ENCODE measurements at regions of chr2 and their contacts with region 1.

Region 1: DNA sequence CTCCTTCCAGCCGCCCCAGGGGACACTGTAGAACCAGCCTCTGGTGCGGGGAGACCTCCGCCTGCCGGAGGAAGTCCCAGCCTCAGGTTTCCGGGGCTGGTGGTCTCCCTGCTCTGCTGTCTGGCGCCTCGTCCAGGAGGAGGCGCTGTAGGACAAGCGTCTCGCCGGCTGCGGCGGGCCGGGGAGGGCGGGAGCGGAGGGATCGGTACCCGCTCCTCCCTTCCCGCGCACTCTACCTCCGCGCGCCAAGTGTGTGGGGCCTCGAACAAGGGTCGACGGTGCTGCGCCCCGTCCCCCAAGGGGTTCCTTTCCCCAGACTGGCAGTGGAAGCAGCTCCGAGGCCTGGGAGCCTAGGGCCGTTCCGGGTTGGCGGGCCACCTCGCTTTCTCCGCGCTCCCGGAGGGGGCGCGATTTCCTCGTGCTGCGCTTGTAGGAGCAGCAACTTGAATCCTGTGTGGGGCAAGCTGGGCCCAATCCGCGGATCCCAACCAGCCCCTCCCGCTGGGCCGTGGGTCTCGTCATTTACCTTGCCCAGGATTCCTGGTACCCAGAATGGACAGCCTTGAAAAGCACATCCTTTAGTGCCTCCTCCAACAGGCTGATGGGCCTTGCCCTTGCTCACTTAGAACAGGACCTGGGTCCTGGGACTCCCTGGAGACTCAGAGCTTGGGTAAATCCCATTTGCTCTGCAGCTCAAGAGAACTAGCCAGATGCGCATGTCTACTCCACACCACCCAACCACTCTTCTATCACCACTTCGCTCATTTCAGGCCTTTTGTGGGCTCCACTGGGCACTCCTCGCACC is 10.6 kb upstream of the HOXD4 start:
- DNase-seq: peak; percentile 64
- H3K4me3 Mint-ChIP-seq: no peak overlapping the region
- H3K27ac Mint-ChIP-seq: no peak overlapping the region
- H3K4me1 Mint-ChIP-seq: peaks cover 8% of the 10 kb centered on the region
- H3K27me3 Mint-ChIP-seq: peaks cover 80% of the 10 kb centered on the region

Region 2: DNA sequence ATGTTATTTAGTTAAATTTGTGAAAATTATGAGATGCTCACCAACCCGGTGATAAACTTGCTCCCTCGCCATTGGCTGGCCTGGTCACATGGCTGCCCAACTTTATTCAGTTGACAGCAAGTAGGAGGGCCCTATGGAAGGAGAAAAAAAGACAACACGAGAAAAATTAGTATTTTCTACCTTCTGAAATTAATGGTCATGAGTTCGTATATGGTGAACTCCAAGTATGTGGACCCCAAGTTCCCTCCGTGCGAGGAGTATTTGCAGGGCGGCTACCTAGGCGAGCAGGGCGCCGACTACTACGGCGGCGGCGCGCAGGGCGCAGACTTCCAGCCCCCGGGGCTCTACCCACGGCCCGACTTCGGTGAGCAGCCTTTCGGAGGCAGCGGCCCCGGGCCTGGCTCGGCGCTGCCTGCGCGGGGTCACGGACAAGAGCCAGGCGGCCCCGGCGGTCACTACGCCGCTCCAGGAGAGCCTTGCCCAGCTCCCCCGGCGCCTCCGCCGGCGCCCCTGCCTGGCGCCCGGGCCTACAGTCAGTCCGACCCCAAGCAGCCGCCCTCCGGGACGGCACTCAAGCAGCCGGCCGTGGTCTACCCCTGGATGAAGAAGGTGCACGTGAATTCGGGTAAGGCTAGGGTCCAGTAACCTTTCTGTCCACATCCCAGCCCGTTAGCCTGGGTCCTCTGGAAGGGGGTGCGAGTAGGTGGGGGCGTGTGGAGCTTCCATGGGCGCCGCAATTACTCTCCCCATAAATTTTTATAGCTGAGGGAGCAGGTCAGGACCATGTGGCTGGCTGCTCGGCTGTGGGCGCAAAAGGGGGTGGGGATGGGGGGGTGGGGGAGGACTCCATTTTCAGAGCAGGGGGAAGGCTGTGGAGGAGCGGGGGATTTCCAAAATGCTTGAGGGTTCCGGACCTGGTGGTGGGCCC is 11.0 kb after region 1 on chr2 and contains the start of gene HOXD4:
- intact Hi-C with region 1: loop called (anchors 2 kb)
- DNase-seq: no peak
- H3K4me3 Mint-ChIP-seq: no peak within 1 kb of the TSS
- H3K27ac Mint-ChIP-seq: no peak within 1 kb of the TSS
- H3K4me1 Mint-ChIP-seq: no peaks in the 10 kb centered on the region
- H3K27me3 Mint-ChIP-seq: peaks cover 88% of the 10 kb centered on the region
- total RNA-seq, gene HOXD4: not detected in 2 replicates

Region 3: DNA sequence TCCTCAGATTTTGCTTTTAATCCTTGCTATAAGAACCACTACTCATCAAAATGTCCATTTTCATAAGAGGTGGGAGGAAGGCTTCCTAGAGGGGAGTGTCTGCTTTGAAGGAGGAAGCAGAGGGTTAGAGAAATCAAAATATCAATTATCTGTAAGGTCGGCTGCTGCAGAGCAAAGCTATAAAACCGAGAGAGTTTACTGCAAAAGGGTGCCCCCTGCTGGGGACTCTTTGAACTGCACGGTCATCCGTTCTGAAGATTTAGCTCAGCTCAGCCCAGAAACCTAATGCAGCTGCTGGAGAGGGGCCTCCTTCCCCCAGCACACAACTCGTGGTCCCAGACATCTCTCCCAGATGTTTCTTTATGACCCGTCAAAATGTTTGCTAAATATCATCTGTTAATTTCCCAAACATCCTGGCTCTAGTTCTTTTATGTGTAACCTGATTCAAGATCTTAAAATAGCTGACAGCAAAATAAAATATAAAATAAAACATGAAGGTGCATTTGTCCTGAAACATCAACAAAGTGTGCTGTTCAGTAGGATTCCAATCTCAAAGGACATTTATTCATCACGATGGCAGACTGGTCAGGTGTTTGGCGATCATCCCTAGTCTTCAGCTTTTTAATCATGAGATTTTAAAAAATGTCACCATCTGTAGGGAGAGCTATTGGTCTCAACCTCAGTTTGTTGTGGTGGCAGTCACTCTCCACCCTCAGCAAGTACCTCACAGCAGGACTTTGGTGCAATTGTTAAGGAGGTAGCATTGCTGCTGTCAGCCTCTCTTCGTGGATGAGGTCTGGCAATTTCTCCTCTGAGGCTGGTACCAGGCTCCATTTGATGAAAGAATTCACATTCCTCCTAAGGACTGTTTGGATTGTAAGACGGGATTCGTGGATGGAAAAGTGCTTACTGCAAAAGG is 314.4 kb after region 1 on chr2:
- intact Hi-C with region 1: loop called (anchors 5 kb)
- DNase-seq: peak; percentile 60
- H3K4me3 Mint-ChIP-seq: no peak overlapping the region
- H3K27ac Mint-ChIP-seq: no peak overlapping the region
- H3K4me1 Mint-ChIP-seq: peaks cover 2% of the 10 kb centered on the region
- H3K27me3 Mint-ChIP-seq: peaks cover 41% of the 10 kb centered on the region

Region 4: GRCh38 chr2:176554101-176555048 is 413.7 kb after region 1 on chr2:
- intact Hi-C with region 1: loop called (anchors 1 kb)
- DNase-seq: no peak
- H3K4me3 Mint-ChIP-seq: peak overlapping the region; percentile 73
- H3K27ac Mint-ChIP-seq: peak overlapping the region; percentile 4
- H3K4me1 Mint-ChIP-seq: peaks cover 11% of the 10 kb centered on the region
- H3K27me3 Mint-ChIP-seq: peaks cover 44% of the 10 kb centered on the region

Region 5: DNA sequence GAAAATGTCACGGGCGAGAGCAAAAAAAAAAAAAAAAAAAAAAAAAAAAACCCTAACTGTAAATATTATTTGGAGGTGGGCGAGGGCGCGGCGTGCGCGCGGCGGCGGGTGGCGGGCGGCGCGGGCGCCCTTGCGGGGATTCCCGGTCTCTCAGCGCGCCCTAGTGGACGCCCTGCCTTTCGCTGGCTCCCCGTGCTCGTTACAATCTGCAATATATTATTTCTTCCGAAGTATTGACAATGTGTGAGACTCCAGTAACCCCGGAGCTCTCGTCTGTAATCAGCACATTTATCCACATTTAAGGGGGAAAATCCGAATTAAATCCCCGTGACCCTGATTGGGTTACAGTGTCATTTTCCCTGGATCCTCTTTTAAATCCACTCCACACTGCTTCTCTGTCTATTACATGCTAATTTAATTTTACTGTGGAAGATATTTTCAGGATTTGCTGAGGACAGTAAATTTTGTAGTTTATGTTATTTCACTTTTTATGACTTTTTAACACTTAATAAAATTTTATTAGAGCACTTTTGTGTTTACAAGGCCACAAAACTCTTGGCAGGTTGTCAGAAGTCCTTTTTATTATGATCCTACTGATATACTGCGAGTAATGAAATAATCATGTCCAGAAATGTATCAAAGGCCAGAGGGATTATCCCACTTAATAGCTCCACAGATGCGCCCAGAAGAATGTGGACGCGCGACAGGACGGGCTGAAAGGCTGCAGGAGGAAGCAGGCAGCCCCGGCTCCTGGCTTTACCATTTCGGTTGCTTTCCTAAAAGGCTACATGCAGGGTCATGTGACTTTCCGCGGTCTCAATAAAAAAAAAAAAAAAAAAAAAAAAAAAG is 497.7 kb after region 1 on chr2:
- intact Hi-C with region 1: loop called (anchors 1 kb)
- DNase-seq: peak; percentile 29
- H3K4me3 Mint-ChIP-seq: peak overlapping the region; percentile 61
- H3K27ac Mint-ChIP-seq: no peak overlapping the region
- H3K4me1 Mint-ChIP-seq: peaks cover 5% of the 10 kb centered on the region
- H3K27me3 Mint-ChIP-seq: peaks cover 60% of the 10 kb centered on the region

Region 6: GRCh38 chr2:176653479-176654443 is 513.0 kb after region 1 on chr2:
- intact Hi-C with region 1: loop called (anchors 1 kb)
- DNase-seq: peak; percentile 11
- H3K4me3 Mint-ChIP-seq: no peak overlapping the region
- H3K27ac Mint-ChIP-seq: no peak overlapping the region
- H3K4me1 Mint-ChIP-seq: peaks cover 12% of the 10 kb centered on the region
- H3K27me3 Mint-ChIP-seq: peaks cover 52% of the 10 kb centered on the region

Measured in activated T-helper 2 cell treated with anti-CD3 and anti-CD28 coated beads, Interferon-gamma antibody, Interleukin-2, Interleukin-4, amounts not matched to agents 10 μg/mL and 5 μg/mL and 100 μg/mL, durations not matched to agents 14 hours and 24 hours and 36 hours (primary cell).